Ovary (tissue), 10 donors: ENCODE measurements at regions of chr9 and their contacts with region 1.

Region 1: GRCh38 chr9:104934691-104935500 is 6.9 kb upstream of the ABCA1 start:
- DNase-seq: no peak
- H3K4me3 ChIP-seq: no peak overlapping the region
- H3K27ac ChIP-seq: no peak overlapping the region
- H3K4me1 ChIP-seq: no peaks in the 10 kb centered on the region
- H3K27me3 ChIP-seq: no peaks in the 10 kb centered on the region
- CTCF ChIP-seq: no peak
- EP300 ChIP-seq: no peak
- POLR2A ChIP-seq: no peak

Region 2: GRCh38 chr9:104968025-104968982 is 33.4 kb after region 1 on chr9:
- intact Hi-C with region 1: loop called in 1 of 4 experiments (anchors 5 kb)
- DNase-seq: peak; percentile 85 to 92 (median 90)
- H3K4me3 ChIP-seq: peak overlapping the region; percentile 67
- H3K27ac ChIP-seq: peak overlapping the region; percentile 67 to 86
- H3K4me1 ChIP-seq: peaks cover 2% of the 10 kb centered on the region
- H3K27me3 ChIP-seq: no peaks in the 10 kb centered on the region
- CTCF ChIP-seq: no peak
- EP300 ChIP-seq: no peak
- POLR2A ChIP-seq: peak; percentile 16

Region 3: DNA sequence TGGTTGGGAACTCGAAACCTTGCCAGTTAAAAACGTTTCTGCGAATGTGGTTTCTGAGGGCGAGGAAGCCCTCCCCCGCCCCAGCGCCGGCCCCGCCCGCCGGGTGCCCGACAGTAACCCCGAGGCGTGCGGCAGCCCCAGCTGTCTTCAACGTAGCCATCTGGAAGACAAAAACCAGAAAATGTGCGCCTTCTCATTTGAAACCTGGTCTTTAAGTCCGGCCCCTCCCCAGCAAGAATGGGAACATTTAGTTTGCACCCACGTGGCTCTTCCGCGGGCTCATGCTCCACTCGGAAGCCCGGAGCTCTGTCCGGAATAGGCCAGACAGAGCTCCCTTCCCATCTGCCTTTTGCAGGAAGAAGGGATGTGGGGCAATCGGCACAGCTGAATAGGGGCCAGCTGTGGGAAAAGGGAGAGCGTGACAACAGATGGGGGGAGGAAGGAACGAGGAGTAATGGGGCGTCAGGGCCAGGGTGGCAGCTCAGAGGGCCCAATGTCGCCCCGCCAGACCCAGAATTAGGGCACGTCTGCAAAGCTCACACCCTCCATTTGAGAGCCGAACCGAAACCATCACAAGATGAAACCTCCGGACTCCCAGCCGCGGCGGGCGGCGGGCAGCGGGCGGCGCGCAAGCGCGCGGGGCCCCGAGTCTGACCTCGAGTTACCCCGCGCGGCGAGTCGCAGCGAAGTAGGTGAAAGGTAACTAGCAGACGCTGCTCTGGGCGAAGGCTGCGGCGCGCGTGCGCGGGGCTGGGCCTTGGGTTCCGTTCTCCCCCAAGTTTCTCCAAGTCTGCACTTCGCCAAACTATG is 56.5 kb after region 1 on chr9:
- intact Hi-C with region 1: loop called in 1 of 4 experiments (anchors 10 kb)
- DNase-seq: peak; percentile 86 to 91 (median 91)
- H3K4me3 ChIP-seq: peak overlapping the region; percentile 60
- H3K27ac ChIP-seq: peak overlapping the region; percentile 53 to 89
- H3K4me1 ChIP-seq: peaks cover 7% of the 10 kb centered on the region
- H3K27me3 ChIP-seq: no peaks in the 10 kb centered on the region
- CTCF ChIP-seq: no peak
- EP300 ChIP-seq: no peak
- POLR2A ChIP-seq: peak; percentile 31